ENCODE measurements at regions of chr20 and their contacts with region 1.

Region 1: GRCh38 chr20:36773597-36774390 is at the start of gene DSN1:
- DNase-seq: peak; percentile 98

Region 2: GRCh38 chr20:36599912-36600345 is 173.9 kb before region 1 on chr20:
- CTCF ChIA-PET with region 1: no interaction called
- POLR2A ChIA-PET with region 1: no interaction called
- DNase-seq: no peak

Region 3: GRCh38 chr20:36745927-36746659 is 27.7 kb before region 1 on chr20 and contains the start of gene NDRG3:
- CTCF ChIA-PET with region 1: no interaction called
- POLR2A ChIA-PET with region 1: interaction called, 14 read pairs
- DNase-seq: peak; percentile 99

Region 4: GRCh38 chr20:36754656-36755222 is 19.1 kb before region 1 on chr20:
- CTCF ChIA-PET with region 1: interaction called, 4 read pairs
- POLR2A ChIA-PET with region 1: interaction called, 10 read pairs
- DNase-seq: peak; percentile 63

Region 5: DNA sequence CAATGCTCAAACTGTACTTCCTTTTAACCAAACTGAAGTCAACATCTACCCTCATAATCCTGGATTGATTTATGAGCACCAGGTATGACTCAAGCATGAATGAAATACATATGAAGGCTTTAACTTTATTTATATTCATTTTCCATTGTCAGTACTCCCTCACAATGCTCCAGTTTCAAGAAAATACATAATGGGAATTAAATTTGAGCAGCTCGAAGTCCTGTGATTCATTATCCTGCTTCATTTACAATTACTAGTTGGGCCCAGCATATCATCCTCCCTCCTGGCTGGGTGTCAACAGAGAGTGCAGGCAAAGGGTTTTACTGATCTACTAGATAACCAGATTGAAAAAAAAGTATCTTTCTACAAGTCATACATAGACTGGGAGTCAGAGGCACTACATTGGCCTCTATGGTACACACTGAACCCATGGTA is 167.6 kb after region 1 on chr20:
- CTCF ChIA-PET with region 1: no interaction called
- POLR2A ChIA-PET with region 1: no interaction called
- DNase-seq: no peak